Head of caudate nucleus (tissue), 42 donors: ENCODE measurements at regions of chr18 and their contacts with region 1.

Region 1: GRCh38 chr18:51029694-51030536 is at the start of gene SMAD4:
- DNase-seq: peak; percentile 90 to 99 (median 96)

Region 2: GRCh38 chr18:50819728-50820378 is 210.1 kb before region 1 on chr18 and contains the start of gene MRO:
- intact Hi-C with region 1: loop called (anchors 10 kb)
- DNase-seq: peak; percentile 83 to 96 (median 90)

Region 3: GRCh38 chr18:50878345-50879301 is 151.3 kb before region 1 on chr18 and contains the start of gene ME2:
- intact Hi-C with region 1: loop called (anchors 10 kb)
- DNase-seq: peak; percentile 80 to 98 (median 95)

Region 4: DNA sequence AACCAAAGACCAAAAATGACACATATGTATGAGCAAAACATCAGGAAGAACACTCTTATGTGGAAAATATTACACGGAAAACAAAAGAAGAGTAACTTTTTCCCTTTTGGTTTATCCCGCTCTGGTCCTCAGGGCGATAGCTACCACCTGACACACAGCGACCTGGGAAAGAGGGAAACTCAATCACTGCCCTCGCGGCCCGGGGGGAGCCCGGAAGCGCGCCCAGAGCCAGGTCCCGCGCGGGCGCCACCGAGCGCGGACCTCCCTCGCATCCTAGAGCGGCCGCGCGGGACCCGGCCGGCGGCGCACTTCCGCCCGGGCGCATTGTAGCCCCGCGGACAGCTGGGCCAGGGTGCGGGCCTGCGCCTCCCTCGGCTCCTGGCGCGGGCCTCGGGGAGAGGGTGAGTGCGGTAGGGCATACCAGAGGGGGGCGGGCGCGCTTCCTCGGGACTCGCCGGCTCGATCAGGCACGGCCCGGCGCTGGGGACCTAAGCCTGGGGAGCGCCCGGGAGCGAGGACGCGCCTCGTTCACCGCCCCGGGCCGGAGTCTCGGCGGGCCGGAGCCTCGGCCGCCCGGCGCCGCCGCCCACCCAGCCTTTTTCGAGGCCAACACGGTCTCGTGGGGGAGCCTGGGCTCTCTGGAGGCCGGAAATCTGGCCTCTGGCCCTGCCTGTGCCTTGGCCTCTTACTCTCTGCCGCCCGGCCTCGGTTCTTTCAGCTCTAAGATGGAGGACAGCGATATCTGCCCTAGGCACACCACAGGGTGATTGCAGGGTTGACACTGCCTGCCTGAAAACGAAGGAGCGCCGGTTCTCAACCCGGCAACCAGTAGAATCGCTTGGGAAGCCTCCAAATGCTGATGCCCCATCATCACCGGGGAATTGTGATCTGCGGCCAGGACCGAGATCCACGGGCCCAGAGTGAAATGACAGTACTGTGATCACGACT is 61.9 kb before region 1 on chr18 and contains the start of gene ELAC1:
- intact Hi-C with region 1: loop called (anchors 5 kb)
- DNase-seq: peak; percentile 34 to 89 (median 78)

Region 5: GRCh38 chr18:51197661-51198424 is 167.9 kb after region 1 on chr18 and contains the start of gene MEX3C:
- intact Hi-C with region 1: loop called (anchors 5 kb)
- DNase-seq: peak; percentile 98 to 100 (median 99)